ENCODE measurements at regions of chr3 and their contacts with region 1.

Region 1: GRCh38 chr3:182792901-182793662 is at the start of gene ATP11B:
- DNase-seq: peak; percentile 69 to 84
- H3K4me3 ChIP-seq: peak within 1 kb of the TSS; percentile 68
- H3K27ac ChIP-seq: peak within 1 kb of the TSS; percentile 87
- H3K4me1 ChIP-seq: peaks cover 38% of the 10 kb centered on the region
- H3K27me3 ChIP-seq: no peaks in the 10 kb centered on the region
- CTCF ChIP-seq: no peak
- total RNA-seq, gene ATP11B: 48.3 and 66.5 TPM in 2 replicates

Region 2: GRCh38 chr3:182180654-182181395 is 612.3 kb before region 1 on chr3:
- CTCF ChIA-PET with region 1: no interaction called
- POLR2A ChIA-PET with region 1: no interaction called
- intact Hi-C with region 1: no loop called
- DNase-seq: peak in 1 of 2 experiments; percentile 41
- H3K4me3 ChIP-seq: no peak overlapping the region
- H3K27ac ChIP-seq: no peak overlapping the region
- H3K4me1 ChIP-seq: peaks cover 16% of the 10 kb centered on the region; the same call in 1 of the 2 replicates
- H3K27me3 ChIP-seq: no peaks in the 10 kb centered on the region
- CTCF ChIP-seq: no peak

Region 3: GRCh38 chr3:182212479-182213076 is 580.5 kb before region 1 on chr3:
- CTCF ChIA-PET with region 1: no interaction called
- POLR2A ChIA-PET with region 1: interaction called, 24 read pairs
- intact Hi-C with region 1: no loop called
- DNase-seq: peak; percentile 87 to 100
- H3K4me3 ChIP-seq: no peak overlapping the region
- H3K27ac ChIP-seq: peak overlapping the region; percentile 62
- H3K4me1 ChIP-seq: peaks cover 25% of the 10 kb centered on the region
- H3K27me3 ChIP-seq: no peaks in the 10 kb centered on the region
- CTCF ChIP-seq: no peak

Region 4: DNA sequence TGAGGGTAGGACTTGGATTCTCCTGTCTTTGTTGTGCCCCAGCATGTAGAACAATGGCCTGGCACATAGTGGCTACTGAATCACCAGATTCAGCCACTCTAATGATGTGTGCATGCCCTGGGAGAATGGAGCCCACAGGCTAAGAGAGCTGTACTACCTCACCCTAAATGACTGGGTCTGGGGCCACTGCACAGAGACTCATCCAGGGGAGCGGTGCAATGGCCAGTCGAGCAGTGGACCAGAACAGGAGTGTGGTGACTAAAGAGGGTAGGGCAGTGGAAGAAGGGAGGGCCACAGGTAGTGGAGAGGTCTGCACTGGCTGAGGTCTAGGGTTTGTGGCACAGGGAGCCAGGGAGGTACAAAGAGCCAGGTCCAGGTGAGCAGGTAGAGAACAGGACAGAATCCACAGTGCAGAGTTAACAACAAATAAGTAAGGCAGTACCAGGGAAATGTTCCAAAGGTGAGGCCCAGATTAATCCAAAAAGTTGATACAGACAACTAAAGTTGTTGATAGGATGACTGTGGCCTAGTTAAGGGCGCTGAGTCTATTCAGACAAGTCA is 142.4 kb before region 1 on chr3:
- CTCF ChIA-PET with region 1: no interaction called
- POLR2A ChIA-PET with region 1: no interaction called
- intact Hi-C with region 1: no loop called
- DNase-seq: peak in 1 of 2 experiments; percentile 2
- H3K4me3 ChIP-seq: no peak overlapping the region
- H3K27ac ChIP-seq: no peak overlapping the region
- H3K4me1 ChIP-seq: no peaks in the 10 kb centered on the region
- H3K27me3 ChIP-seq: no peaks in the 10 kb centered on the region
- CTCF ChIP-seq: no peak

Region 5: DNA sequence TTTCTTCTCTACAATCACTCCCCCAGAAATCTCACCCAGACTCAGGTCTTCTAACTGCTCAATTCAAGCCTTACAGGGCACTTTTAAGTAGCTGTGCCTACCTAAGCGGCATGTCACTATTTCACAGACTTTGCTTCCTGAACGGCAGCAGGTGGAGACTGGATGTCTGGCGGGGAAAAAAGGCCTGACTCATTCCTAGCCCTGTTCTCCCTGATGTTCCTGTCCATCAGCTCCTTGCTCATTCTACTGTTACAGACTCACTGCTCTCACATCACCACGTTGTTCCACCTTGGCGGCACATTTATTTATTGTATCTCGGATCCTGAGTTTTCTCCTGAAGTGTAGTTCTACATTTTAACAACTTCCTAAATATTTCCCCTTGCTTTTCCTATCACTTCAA is 52.4 kb before region 1 on chr3:
- CTCF ChIA-PET with region 1: no interaction called
- POLR2A ChIA-PET with region 1: interaction called, 3 read pairs
- intact Hi-C with region 1: loop called (anchors 1 kb)
- DNase-seq: peak; percentile 83 to 96
- H3K4me3 ChIP-seq: peak overlapping the region; percentile 47
- H3K27ac ChIP-seq: peak overlapping the region; percentile 98
- H3K4me1 ChIP-seq: peaks cover 51% of the 10 kb centered on the region
- H3K27me3 ChIP-seq: no peaks in the 10 kb centered on the region
- CTCF ChIP-seq: no peak

Region 6: GRCh38 chr3:182769673-182770072 is 23.4 kb before region 1 on chr3:
- CTCF ChIA-PET with region 1: no interaction called
- POLR2A ChIA-PET with region 1: interaction called, 11 read pairs
- intact Hi-C with region 1: no loop called
- DNase-seq: no peak
- H3K4me3 ChIP-seq: no peak overlapping the region
- H3K27ac ChIP-seq: no peak overlapping the region
- H3K4me1 ChIP-seq: no peaks in the 10 kb centered on the region
- H3K27me3 ChIP-seq: no peaks in the 10 kb centered on the region
- CTCF ChIP-seq: no peak

Region 7: DNA sequence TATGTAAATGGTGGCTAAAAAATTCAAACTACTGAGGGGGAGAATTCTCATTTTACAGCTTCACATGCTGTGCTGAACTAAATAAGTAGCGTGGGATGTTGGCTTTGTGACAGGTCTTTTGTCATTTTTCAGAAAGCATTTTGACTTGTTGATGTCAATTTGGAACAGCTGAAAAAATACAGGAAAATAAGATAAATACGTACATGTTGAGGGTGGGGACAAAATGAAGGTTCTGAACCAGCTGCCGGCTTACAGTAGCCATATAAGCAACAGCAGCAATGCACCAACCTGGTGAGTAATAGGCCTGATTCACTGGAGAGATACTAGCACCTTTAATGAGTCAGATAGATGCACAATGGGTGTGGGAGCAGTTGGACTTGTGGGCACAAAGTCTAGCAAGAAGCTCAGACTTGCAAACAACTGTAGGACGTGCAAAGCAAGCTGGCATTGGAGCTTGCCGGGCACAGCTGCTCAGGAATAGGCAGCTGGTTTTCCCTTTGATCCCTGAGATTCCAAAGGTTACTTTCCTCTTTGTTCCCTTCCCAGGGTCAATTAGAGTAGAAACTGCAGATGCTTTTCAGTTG is 472.8 kb after region 1 on chr3:
- CTCF ChIA-PET with region 1: no interaction called
- POLR2A ChIA-PET with region 1: interaction called, 3 read pairs
- intact Hi-C with region 1: loop called (anchors 5 kb)
- DNase-seq: peak; percentile 73 to 99
- H3K4me3 ChIP-seq: no peak overlapping the region; the same call in 1 of the 2 replicates
- H3K27ac ChIP-seq: peak overlapping the region; percentile 85
- H3K4me1 ChIP-seq: peaks cover 65% of the 10 kb centered on the region
- H3K27me3 ChIP-seq: no peaks in the 10 kb centered on the region
- CTCF ChIP-seq: no peak

Region 8: DNA sequence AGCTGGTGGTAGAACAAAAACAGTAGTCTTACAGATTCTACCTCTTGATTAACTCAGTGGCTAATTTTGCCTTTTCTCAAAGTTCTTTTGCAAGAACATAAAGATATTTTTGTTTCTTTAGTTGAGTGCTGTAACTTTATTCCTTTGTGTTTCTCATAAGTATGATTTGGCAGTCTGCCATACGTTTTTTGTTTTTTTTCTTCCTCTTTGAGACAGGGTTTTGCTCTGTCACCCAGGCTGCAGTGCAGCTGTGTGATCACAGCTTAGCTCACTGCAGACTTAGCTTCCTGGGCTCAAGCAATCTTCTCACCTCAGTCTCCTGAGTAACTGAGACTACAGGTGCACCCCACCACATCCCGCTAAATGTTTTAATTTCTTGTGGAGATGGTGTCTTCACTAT is 482.3 kb after region 1 on chr3:
- CTCF ChIA-PET with region 1: no interaction called
- POLR2A ChIA-PET with region 1: interaction called, 20 read pairs
- intact Hi-C with region 1: no loop called
- DNase-seq: peak; percentile 48 to 82
- H3K4me3 ChIP-seq: peak overlapping the region; percentile 7; the same call in 1 of the 2 replicates
- H3K27ac ChIP-seq: peak overlapping the region; percentile 87
- H3K4me1 ChIP-seq: peaks cover 64% of the 10 kb centered on the region
- H3K27me3 ChIP-seq: no peaks in the 10 kb centered on the region
- CTCF ChIP-seq: no peak

Region 9: DNA sequence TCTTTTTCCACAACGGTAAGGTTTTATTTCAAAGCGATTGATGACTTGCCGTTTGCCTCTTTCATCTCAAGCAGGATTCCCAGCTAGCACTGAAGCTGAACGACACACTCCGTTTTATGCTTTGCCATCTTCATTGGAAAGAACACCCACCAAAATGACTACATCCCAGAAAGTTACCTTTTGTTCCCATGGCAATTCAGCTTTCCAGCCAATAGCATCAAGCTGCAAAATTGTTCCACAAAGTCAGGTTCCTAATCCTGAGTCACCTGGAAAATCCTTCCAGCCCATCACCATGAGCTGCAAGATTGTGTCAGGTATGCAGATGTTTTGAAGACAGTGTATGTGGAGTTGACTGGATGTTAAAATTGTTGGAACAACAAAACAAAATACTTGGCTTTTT is 961.0 kb after region 1 on chr3:
- CTCF ChIA-PET with region 1: no interaction called
- POLR2A ChIA-PET with region 1: no interaction called
- intact Hi-C with region 1: no loop called
- DNase-seq: no peak
- H3K4me3 ChIP-seq: no peak overlapping the region
- H3K27ac ChIP-seq: no peak overlapping the region
- H3K4me1 ChIP-seq: no peaks in the 10 kb centered on the region
- H3K27me3 ChIP-seq: no peaks in the 10 kb centered on the region
- CTCF ChIP-seq: no peak

Measured in PC-9 (cell line).